A673 (cell line): ENCODE measurements at regions of chr18 and their contacts with region 1.

Region 1: DNA sequence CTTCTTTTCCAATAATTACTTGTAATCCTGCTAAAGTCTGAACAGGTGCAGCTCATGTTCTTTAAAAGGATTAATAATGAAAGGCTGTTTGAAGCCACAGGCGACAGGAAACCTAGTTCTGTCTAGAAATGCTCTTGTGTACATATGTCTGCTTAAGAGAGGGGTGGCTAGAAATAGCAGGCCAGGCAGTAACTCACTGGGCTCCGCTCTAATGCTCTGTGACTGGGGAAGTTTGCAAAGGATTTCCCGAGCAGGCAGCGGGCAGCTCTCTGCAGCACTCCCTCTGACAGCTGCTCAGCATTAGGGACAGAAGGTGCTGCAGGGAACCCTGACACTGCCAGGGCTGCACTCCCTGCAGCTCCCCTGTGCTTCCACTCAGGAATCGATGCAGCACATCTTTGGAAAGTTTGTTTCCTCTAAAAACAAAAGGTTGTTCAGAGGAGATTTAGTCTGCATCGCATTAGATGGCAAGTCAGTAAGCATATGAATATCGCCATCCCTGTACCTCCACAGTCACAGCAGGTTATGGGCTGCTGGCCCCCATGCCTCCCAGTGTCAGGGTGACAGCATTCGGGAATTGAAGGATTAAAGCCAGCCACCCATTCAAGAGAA is 33.1 kb upstream of the TTC39C start:
- DNase-seq: no peak
- H3K4me3 ChIP-seq: no peak overlapping the region
- H3K27ac ChIP-seq: no peak overlapping the region
- H3K4me1 ChIP-seq: no peaks in the 10 kb centered on the region
- H3K27me3 ChIP-seq: no peaks in the 10 kb centered on the region
- CTCF ChIP-seq: no peak

Region 2: DNA sequence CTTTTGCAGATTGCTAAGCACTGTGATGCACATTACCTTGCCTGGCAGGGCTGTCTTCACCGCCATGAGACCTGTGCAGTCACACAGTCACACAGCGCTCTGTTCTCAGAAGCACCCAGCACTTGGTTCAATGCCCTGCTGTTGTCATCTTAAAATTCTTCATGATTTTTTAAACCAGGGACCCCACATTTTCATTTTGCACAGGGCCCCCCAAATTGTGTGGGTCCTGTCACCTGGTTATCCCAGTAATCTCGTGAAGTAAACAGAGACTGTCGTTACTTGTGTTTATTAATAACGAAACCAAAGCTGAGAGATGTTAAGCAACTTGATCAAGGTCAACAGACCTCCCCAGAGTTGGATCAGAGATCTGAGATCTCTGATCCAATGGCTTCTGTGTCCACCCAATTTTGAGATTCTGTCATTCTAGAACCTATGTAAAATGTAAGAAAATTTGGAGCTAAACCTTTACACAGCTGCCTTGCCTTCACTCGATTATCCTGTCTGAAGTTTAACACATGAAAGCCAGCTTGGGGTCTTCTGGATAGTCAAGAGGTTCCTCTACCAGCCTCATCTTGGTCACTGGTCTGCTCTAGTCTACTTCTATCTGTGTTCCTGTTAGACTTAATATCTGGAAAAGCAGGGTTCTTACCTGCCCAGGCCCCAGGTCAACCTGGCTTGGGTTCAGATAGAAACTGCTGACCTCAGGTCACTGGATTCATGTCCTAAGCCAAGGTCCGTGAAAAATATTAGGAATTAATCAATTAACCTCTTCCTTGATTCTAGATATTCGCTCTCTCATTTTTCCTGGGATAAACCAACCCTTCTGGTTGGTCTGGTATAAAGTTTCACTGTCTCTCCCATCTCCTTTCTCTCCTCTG is 19.4 kb after region 1 on chr18:
- CTCF ChIA-PET with region 1: no interaction called
- POLR2A ChIA-PET with region 1: interaction called, 11 read pairs
- intact Hi-C with region 1: no loop called
- DNase-seq: no peak
- H3K4me3 ChIP-seq: no peak overlapping the region
- H3K27ac ChIP-seq: no peak overlapping the region
- H3K4me1 ChIP-seq: no peaks in the 10 kb centered on the region
- H3K27me3 ChIP-seq: no peaks in the 10 kb centered on the region
- CTCF ChIP-seq: no peak

Region 3: GRCh38 chr18:24051031-24051947 is 69.8 kb after region 1 on chr18:
- CTCF ChIA-PET with region 1: no interaction called
- POLR2A ChIA-PET with region 1: no interaction called
- intact Hi-C with region 1: no loop called
- DNase-seq: no peak
- H3K4me3 ChIP-seq: no peak overlapping the region
- H3K27ac ChIP-seq: no peak overlapping the region
- H3K4me1 ChIP-seq: peaks cover 20% of the 10 kb centered on the region
- H3K27me3 ChIP-seq: no peaks in the 10 kb centered on the region
- CTCF ChIP-seq: no peak